Activated T-helper 2 cell treated with anti-CD3 and anti-CD28 coated beads, Interferon-gamma antibody, Interleukin-2, Interleukin-4, amounts not matched to agents 10 μg/mL and 5 μg/mL and 100 μg/mL, durations not matched to agents 14 hours and 24 hours and 36 hours (primary cell): ENCODE measurements at regions of chr16 and their contacts with region 1.

Region 1: DNA sequence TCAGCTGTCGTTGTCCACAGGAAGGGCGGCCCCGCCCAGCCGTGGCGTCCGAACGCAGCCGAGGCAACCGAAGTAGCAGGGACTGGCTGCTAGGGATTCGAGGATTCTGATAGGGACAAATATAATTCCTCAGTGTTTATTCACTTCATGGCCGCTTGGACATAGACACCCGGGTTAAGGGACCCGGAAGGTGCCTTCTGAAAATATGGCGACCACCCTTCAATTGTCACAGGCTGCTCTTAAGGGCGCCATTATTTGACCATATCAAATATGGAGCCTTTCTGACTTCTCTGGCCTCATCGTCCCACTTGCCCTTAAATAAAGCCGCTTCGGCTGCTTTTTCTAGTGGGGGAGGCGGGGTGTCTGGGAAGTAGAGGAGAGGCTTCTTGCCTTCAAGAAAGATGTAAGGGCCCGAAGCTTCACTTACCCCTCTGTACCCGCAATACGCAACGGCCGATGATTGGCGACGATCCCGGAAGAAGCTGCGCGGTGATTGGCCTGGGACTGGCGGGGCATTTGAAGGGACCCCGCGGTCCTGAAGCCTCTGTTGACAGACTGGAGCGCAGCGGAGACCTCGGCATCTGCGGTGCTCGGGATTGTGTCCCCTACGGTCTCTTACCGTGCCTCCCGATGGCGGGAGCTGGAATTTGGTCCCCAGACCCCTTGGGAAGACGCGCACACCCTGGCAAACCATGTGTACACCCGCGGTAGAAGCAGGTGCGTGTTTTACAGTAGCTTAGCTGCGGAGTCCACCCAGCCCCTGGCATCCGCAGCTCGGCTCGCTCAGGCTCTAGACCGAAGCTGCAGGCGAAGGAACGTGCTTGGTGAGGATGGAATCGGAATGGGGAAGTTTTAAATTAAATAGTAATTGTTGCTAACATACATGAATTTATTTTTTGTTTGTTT is at the start of gene ZNF688:
- DNase-seq: peak; percentile 94
- H3K4me3 Mint-ChIP-seq: peak within 1 kb of the TSS; percentile 90
- H3K27ac Mint-ChIP-seq: peak within 1 kb of the TSS; percentile 85
- H3K4me1 Mint-ChIP-seq: peaks cover 38% of the 10 kb centered on the region
- H3K27me3 Mint-ChIP-seq: no peaks in the 10 kb centered on the region
- total RNA-seq, gene ZNF688: 8.7 and 9.2 TPM in 2 replicates

Region 2: DNA sequence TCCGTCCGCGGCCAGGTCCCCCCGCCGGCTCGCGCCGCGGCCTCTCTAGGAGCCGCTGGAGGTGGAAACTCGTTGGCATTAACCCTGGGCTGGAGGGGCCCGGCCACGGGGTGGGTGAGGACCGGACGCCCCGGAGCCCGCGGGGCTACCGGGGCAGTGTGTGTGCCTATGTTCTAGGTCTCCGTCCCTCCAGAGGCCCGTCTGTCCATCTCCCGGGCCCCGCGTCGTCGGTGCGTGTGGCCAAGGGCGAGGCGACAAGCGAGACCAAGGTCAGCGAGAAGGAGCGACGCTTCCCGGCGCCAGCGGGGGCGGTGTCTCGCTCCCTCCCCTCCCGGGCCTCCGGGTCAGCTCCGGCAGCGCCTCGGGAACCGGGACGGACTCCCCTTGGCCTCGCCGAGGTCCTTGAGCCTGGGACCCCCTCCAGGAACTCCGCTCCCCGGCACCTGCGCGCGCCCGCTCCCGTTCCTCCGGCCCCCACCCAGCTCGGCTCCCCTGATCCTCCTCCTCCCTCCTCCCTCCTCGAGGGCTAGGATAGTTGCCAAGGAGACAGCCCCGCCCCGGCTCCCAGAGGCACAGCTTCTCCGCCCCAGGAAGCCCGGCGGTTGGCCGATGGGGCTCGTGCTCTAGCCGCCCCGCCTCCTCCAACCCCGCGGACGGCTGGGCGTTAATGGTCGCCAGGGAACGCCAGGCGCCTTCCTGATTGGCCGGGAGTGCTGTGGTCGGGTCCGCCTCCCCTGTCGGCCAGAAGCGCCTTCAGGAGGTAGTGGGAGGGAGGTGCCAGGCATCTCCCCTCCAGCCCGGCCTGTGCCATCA is 44.9 kb before region 1 on chr16:
- intact Hi-C with region 1: loop called (anchors 2 kb)
- DNase-seq: peak; percentile 94
- H3K4me3 Mint-ChIP-seq: peak overlapping the region; percentile 84
- H3K27ac Mint-ChIP-seq: peak overlapping the region; percentile 67
- H3K4me1 Mint-ChIP-seq: peaks cover 23% of the 10 kb centered on the region
- H3K27me3 Mint-ChIP-seq: no peaks in the 10 kb centered on the region

Region 3: GRCh38 chr16:30551781-30552180 is 20.2 kb before region 1 on chr16:
- intact Hi-C with region 1: loop called (anchors 1 kb)
- DNase-seq: peak; percentile 77
- H3K4me3 Mint-ChIP-seq: peak overlapping the region; percentile 58
- H3K27ac Mint-ChIP-seq: peak overlapping the region; percentile 95
- H3K4me1 Mint-ChIP-seq: peaks cover 48% of the 10 kb centered on the region
- H3K27me3 Mint-ChIP-seq: no peaks in the 10 kb centered on the region

Region 4: DNA sequence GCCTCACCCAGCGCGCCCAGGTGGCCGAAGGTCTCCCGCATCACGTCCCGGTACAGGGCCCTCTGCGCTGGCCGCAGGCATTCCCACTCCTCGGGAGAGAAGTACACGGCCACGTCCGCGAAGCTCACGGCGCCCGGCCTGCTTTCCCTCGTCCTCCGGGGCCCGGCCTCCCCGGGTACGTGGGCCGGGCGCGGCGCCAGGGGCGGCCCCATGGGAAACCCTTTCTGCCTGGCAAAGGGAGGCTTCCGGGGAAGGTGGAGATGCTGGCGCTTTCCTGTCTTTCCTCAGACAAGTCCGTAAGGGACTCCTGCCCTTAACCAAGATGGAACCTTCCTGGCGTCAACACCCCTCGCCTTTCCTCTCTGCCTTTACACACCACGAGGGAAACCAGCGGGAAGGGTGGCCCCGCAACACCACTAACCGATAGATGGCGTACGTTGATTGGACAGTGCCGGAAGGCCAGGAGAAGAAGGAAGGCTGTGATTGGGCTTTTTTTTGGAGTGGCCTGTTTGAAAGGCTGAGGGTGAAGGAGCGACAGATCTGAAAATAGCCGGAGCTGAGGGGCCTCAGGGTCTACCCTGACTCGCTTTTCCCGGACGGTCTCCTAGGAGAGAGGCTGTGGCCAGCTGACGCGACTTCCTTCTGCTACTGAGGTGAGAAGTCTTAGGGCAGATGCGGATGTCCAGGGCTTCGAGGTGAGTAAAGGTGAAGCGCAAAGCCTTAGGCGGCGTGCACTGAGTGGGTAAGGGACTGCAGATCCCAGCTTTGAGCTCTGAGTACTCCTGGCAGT is 13.6 kb after region 1 on chr16 and contains the start of gene ZNF785:
- intact Hi-C with region 1: loop called (anchors 1 kb)
- DNase-seq: peak; percentile 92
- H3K4me3 Mint-ChIP-seq: peak within 1 kb of the TSS; percentile 91
- H3K27ac Mint-ChIP-seq: peak within 1 kb of the TSS; percentile 82
- H3K4me1 Mint-ChIP-seq: peaks cover 17% of the 10 kb centered on the region
- H3K27me3 Mint-ChIP-seq: no peaks in the 10 kb centered on the region
- total RNA-seq, gene ZNF785: 18.9 and 22.2 TPM in 2 replicates

Region 5: DNA sequence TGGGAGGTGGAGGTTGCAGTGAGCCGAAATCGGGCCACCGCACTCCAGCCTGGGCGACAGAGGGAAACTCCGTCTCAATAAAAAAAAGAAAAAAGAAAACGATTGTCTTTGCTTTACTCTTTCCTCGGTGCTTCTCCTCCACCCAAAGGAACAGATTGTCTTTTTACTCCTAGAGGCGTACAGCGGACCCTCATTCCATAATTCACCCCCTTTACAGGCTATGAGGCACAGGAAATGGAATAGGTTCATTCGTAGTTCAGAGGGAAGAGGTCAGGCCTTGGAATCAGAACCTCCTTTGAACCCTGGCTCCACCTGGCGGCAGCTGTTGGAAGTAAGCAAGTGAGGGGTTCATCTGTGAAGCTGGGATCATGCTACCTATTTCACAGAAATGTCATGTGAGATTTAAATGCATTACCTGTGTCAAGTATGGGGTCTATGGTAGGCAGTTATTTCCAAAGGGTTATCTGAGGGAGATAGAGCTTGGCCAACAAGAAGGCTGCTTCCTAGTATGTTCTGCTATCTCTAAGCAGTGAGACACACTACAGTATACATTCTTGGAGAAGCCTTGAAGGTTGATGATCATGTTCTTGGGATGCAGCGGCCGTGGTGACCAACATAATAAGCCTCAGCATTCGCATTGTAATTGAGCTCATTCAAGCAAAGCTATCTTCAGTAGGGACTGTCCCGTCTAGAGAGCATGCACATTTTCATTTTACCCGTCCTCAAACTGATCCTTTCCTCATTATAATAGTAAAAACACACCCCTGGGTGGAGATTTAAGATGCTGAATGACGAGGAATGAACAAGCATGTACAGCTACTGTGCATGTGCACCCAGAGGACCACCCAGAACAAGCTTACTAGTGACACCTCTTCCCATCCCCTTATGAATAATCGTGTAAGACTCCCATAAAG is 56.9 kb after region 1 on chr16:
- intact Hi-C with region 1: loop called (anchors 5 kb)
- DNase-seq: peak; percentile 77
- H3K4me3 Mint-ChIP-seq: peak overlapping the region; percentile 46
- H3K27ac Mint-ChIP-seq: peak overlapping the region; percentile 60
- H3K4me1 Mint-ChIP-seq: peaks cover 4% of the 10 kb centered on the region
- H3K27me3 Mint-ChIP-seq: peaks cover under 1% of the 10 kb centered on the region